Activated naive CD4-positive, alpha-beta T cell treated with anti-CD3 and anti-CD28 coated beads for 36 hours (primary cell): ENCODE measurements at regions of chr10 and their contacts with region 1.

Region 1: DNA sequence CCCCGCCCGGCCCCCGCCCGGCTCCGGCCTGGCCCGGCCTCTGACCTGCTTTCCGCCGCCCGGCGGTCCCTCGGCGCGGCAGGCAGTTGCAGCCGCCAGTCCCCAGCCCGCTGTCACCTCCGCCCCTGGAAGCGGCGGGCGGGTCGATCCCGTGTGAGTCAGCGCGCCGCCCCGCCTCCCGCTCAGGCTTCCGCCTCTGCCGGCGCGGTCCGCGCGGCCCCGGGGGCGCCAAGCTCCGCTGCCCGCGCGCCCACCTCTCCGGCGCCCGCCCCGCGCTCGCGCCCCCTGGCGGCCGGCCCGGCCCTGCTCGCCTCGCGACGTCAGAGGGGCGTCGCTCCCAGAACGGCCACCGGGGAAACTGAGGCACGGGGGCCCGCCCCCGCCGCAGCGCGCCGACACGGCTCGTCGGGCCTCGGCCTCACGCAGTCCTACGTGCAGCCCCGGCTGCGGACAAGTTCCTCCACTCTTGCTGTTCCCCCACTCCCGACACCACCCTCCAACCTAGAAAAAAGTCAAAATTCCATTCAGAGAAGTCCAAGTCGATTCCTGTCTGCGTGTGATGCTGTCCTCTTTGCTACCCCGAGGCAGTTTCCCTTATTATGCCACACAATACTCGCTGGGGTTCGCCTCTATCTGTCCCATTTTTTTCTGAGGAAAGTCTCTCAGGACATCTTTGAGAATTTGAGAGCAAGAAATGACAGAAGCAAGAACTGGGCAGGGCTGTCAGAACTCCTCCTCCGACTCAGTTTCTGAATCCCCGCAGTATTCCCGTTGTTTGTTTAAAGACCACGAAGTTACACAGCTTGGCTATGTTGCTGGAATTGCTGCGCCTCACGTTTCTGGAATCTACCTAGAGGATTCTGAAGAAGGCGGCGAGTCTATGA is at the start of gene DNMBP:
- DNase-seq: peak; percentile 82
- H3K4me3 Mint-ChIP-seq: peak within 1 kb of the TSS; percentile 85
- H3K27ac Mint-ChIP-seq: peak within 1 kb of the TSS; percentile 37
- H3K4me1 Mint-ChIP-seq: peaks cover 38% of the 10 kb centered on the region
- H3K27me3 Mint-ChIP-seq: peaks cover 7% of the 10 kb centered on the region
- total RNA-seq, gene DNMBP: 2.2 to 2.4 TPM

Region 2: GRCh38 chr10:99430451-99431189 is 579.4 kb before region 1 on chr10 and contains the start of gene GOT1:
- CTCF ChIA-PET with region 1: no interaction called
- intact Hi-C with region 1: loop called (anchors 5 kb)
- DNase-seq: peak; percentile 99
- H3K4me3 Mint-ChIP-seq: peak within 1 kb of the TSS; percentile 95
- H3K27ac Mint-ChIP-seq: peak within 1 kb of the TSS; percentile 90
- H3K4me1 Mint-ChIP-seq: peaks cover 38% of the 10 kb centered on the region
- H3K27me3 Mint-ChIP-seq: no peaks in the 10 kb centered on the region
- total RNA-seq, gene GOT1: 62.6 to 67.3 TPM

Region 3: DNA sequence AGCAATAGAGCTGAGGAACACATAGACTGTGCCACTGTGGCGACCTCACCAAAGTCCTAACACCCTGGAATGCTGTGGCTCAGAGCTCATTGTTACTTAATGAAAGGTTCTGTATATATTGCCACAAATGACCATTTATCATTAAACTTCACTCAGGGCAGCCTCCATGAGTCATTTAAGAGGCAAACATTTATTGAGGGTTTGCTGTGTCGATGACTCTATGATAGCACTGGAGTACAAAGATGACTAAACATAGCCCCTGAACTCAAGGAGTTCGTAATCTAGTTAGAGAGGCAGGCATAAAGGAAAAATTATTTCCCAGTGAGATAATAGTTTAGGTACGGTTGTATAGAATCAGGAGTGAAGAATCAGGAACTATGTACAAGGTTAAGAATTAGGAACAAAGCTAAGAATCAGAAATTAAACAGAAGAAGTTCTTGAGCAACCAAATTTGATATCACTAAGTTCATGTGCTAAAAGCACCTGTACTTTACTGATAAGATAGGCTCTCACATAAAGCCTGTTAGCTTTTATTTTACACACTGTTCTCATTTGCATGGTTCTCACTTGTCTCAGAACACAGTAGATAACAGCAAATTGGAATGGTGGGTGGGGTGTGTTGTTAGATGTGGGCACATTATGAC is 342.8 kb before region 1 on chr10:
- CTCF ChIA-PET with region 1: no interaction called
- intact Hi-C with region 1: no loop called
- DNase-seq: no peak
- H3K4me3 Mint-ChIP-seq: no peak overlapping the region
- H3K27ac Mint-ChIP-seq: no peak overlapping the region
- H3K4me1 Mint-ChIP-seq: no peaks in the 10 kb centered on the region
- H3K27me3 Mint-ChIP-seq: no peaks in the 10 kb centered on the region

Region 4: GRCh38 chr10:99845837-99846382 is 164.1 kb before region 1 on chr10:
- CTCF ChIA-PET with region 1: interaction called, 40 read pairs
- intact Hi-C with region 1: loop called (anchors 1 kb)
- DNase-seq: peak; percentile 82
- H3K4me3 Mint-ChIP-seq: no peak overlapping the region
- H3K27ac Mint-ChIP-seq: no peak overlapping the region
- H3K4me1 Mint-ChIP-seq: peaks cover 4% of the 10 kb centered on the region
- H3K27me3 Mint-ChIP-seq: no peaks in the 10 kb centered on the region

Region 5: GRCh38 chr10:99958302-99958701 is 51.7 kb before region 1 on chr10:
- CTCF ChIA-PET with region 1: no interaction called
- intact Hi-C with region 1: no loop called
- DNase-seq: no peak
- H3K4me3 Mint-ChIP-seq: no peak overlapping the region
- H3K27ac Mint-ChIP-seq: no peak overlapping the region
- H3K4me1 Mint-ChIP-seq: no peaks in the 10 kb centered on the region
- H3K27me3 Mint-ChIP-seq: no peaks in the 10 kb centered on the region

Region 6: DNA sequence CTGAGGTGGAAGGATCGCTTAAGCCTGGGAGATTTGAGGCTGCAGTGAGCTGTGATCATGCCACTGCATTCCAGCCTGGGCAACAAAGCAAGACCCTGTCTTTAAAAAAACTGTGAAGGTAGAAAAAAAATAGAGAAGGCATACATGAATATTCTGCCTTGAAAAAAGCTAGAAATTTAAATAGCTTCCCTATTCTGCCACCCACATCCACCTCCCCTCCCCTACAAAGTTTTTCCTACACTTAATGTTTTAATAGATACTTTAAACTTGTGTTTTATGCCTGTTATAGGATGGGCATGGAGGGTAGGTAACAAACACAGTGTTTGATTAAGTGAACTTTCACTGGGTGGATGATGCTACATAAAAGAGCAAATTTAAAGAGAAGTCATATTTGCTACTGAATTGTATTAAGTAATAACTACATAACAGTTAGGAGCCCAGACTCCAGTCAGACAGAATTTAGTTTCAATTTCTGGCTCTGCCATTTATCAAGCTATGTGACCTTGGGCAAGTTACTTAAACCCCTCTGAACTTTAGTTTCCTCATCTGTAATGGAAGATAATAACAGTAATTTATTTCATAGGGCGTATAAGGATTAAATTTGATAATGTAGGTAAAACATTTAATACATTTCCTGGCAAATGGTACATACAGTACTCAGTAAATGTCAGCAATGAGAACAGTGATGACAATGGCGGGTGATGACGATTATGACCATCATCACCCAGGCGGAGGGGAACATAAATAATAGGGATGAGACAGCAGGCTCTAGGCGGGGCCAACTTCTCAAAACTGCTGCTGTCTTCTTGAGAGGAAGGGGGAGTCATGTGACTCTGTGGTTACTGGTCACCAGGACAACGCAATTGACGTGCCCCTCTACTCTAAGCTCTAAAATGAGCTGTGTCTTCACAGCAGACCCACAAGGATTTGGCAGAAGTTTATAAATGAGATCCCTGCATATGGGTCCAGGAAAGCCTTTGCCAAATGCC is 16.0 kb before region 1 on chr10:
- CTCF ChIA-PET with region 1: interaction called, 8 read pairs
- intact Hi-C with region 1: loop called (anchors 1 kb)
- DNase-seq: peak; percentile 84
- H3K4me3 Mint-ChIP-seq: peak overlapping the region; percentile 18
- H3K27ac Mint-ChIP-seq: peak overlapping the region; percentile 11
- H3K4me1 Mint-ChIP-seq: peaks cover 19% of the 10 kb centered on the region
- H3K27me3 Mint-ChIP-seq: no peaks in the 10 kb centered on the region

Region 7: GRCh38 chr10:100286051-100287033 is 276.3 kb after region 1 on chr10 and contains the start of gene BLOC1S2:
- CTCF ChIA-PET with region 1: no interaction called
- intact Hi-C with region 1: loop called (anchors 2 kb)
- DNase-seq: peak; percentile 87
- H3K4me3 Mint-ChIP-seq: peak within 1 kb of the TSS; percentile 99
- H3K27ac Mint-ChIP-seq: peak within 1 kb of the TSS; percentile 98
- H3K4me1 Mint-ChIP-seq: peaks cover 25% of the 10 kb centered on the region
- H3K27me3 Mint-ChIP-seq: no peaks in the 10 kb centered on the region
- total RNA-seq, gene BLOC1S2: 68.5 to 69.1 TPM

Region 8: DNA sequence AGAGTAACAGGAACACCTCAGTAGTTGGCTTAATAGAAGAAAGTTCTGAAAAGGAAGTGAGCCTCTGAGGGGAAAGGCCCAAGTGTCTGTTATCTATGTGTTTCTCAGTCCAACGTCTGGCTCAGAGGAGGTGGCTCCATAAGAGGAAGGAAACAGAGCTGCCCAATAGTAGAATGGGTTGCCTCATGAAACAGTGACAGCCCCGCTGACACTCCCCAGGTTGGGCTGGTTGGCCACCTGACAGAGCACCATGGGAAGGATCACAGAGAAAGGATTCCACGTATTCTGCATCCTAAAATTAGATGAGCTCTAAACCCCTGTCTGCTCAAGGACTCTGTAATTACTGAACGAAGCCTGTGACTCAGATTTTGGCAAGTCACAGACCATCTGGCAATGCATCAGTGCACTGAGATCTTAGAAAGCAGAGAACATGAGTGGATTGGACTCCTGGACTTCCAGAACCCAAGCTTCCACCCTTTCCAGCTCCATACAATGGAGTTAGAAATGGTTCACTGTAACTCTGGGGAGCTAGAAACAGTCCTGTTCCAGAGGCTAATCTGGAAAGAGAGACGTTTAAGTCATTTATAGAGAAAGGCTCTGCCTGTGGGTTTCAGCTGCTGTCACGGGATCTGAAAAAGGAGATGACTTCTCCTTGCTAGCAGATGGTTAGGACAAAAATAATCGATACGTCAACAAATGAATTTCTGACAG is 317.1 kb after region 1 on chr10:
- CTCF ChIA-PET with region 1: no interaction called
- intact Hi-C with region 1: no loop called
- DNase-seq: peak; percentile 82
- H3K4me3 Mint-ChIP-seq: peak overlapping the region; percentile 5
- H3K27ac Mint-ChIP-seq: peak overlapping the region; percentile 80
- H3K4me1 Mint-ChIP-seq: peaks cover 16% of the 10 kb centered on the region
- H3K27me3 Mint-ChIP-seq: peaks cover 4% of the 10 kb centered on the region

Region 9: DNA sequence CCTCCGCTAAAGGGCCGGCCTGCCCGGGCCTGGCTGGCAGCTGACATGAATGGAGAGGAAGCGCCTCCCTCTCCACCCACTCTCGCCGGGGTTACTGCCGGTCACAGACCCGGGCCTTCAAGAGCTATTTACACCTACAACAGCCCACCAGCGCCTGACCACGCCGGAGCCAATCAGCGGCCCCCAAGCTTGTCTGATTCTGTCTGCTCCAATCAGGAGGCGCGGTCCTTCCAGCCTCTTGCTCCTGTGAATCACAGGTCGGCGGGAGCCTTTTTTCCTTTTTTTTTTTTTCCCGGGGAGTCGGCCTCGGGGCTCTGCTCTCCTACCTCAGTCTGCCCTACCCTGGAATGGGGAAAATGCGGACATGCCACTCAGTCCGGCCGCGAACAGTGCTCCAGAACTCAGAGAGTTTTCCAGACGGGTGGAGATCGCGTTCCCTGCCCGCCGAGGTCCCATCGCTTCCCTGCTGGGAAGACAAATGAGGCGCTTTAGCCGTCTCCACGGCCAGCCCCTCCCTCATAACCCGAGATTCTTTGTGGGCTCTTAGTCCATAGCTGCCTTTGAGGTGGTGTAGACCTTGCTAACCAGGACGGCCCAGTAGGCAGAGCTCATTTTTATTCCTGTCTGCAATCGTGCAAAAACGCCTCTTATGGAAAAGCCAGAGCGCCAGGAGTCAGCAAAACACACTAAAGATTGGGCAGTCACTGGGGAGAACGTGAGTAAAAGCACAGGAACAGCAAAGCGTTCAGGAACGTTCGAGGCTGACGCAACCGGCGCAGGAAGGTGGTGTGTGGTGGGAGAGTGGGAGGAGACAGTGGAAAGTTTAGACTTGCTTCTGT is 363.5 kb after region 1 on chr10:
- CTCF ChIA-PET with region 1: no interaction called
- intact Hi-C with region 1: no loop called
- DNase-seq: peak; percentile 99
- H3K4me3 Mint-ChIP-seq: no peak overlapping the region
- H3K27ac Mint-ChIP-seq: no peak overlapping the region
- H3K4me1 Mint-ChIP-seq: peaks cover 30% of the 10 kb centered on the region
- H3K27me3 Mint-ChIP-seq: no peaks in the 10 kb centered on the region